BJ (cell line): ENCODE measurements at regions of chr1 and their contacts with region 1.

Region 1: DNA sequence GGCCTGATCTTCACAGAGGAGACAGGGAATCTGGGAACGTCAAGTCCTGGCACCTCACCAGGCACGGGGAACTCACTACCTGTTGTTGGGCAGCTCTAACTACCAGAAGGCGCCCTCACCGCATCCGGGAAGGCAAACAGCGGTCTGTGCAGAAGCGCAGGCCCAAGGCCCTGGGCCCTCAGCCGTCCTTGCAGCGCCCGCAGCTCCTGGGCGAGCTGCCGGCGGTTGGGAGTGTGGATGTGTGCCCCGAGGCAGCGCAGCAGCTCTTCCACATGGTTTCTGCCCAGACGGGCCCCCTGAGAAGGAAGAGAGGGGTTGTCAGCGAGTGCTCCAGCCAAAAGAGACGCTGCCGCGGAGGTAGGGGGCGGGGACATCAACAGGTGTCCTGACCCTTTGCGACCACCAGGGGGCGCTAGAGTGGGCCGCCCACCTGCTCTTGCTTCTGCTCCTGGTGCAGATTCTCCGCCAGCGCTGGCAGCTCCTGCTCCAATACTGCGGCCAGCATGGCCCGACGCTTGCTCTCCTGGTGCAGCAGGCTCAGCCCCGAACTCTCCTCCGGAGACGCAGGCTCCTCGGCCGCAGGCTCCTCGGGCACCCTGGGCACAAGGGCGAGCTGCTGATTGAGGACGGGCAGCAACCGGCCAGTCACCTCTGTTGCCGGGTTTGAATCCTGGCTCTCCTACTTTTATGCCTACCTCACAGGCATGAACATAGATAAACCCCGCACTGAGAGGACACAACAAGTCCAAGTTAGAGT is 9.3 kb downstream of the MAP3K6 start:
- DNase-seq: no peak
- H3K4me3 ChIP-seq: no peak overlapping the region
- H3K27me3 ChIP-seq: no peaks in the 10 kb centered on the region
- CTCF ChIP-seq: peak; percentile 91

Region 2: GRCh38 chr1:27341525-27342252 is 15.8 kb before region 1 on chr1 and contains the start of gene SYTL1:
- CTCF ChIA-PET with region 1: interaction called, 17 read pairs
- POLR2A ChIA-PET with region 1: no interaction called
- DNase-seq: no peak
- H3K4me3 ChIP-seq: no peak within 1 kb of the TSS
- H3K27me3 ChIP-seq: no peaks in the 10 kb centered on the region
- CTCF ChIP-seq: no peak
- polyA plus RNA-seq, gene SYTL1: 0.20 and 0.23 TPM in 2 replicates